ENCODE measurements at regions of chr11 and their contacts with region 1.

Region 1: GRCh38 chr11:30196400-30197206 is 34.2 kb upstream of the FSHB start:
- DNase-seq: no peak
- H3K4me3 ChIP-seq: no peak overlapping the region
- H3K27ac ChIP-seq: no peak overlapping the region
- H3K4me1 ChIP-seq: no peaks in the 10 kb centered on the region
- H3K27me3 ChIP-seq: no peaks in the 10 kb centered on the region
- CTCF ChIP-seq: peak in 2 of 3 experiments; percentile 25 to 47
- POLR2A ChIP-seq: no peak

Region 2: GRCh38 chr11:30120045-30120589 is 76.5 kb before region 1 on chr11:
- intact Hi-C with region 1: no loop called
- DNase-seq: no peak
- H3K4me3 ChIP-seq: no peak overlapping the region
- H3K27ac ChIP-seq: no peak overlapping the region
- H3K4me1 ChIP-seq: no peaks in the 10 kb centered on the region
- H3K27me3 ChIP-seq: no peaks in the 10 kb centered on the region
- CTCF ChIP-seq: no peak
- POLR2A ChIP-seq: no peak

Region 3: DNA sequence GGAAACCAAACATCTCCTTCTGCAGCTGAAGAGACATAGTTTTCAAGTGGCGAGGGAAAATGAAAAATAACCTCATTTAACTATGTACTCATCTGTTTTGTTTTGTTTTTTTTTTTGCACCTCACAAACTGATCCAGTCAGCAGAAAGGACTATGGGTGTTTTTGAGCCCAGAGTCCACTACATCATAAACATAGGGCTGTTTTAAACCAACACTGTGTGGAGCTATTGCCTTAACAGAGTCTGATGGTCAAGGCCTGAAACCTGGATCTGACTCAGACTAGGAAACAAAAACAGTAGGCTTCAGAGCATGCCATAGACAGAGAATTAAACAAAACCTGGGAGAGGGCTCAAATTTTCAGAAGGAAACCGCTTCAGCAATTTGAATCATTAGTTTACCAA is 65.1 kb before region 1 on chr11:
- intact Hi-C with region 1: loop called (anchors 10 kb)
- DNase-seq: no peak
- H3K4me3 ChIP-seq: no peak overlapping the region
- H3K27ac ChIP-seq: no peak overlapping the region
- H3K4me1 ChIP-seq: no peaks in the 10 kb centered on the region
- H3K27me3 ChIP-seq: no peaks in the 10 kb centered on the region
- CTCF ChIP-seq: no peak
- POLR2A ChIP-seq: no peak

Measured in vagina (tissue), 2 donors.